Activated CD4-positive, alpha-beta T cell treated with anti-CD3 and anti-CD28 coated beads for 36 hours (primary cell): ENCODE measurements at regions of chr6 and their contacts with region 1.

Region 1: GRCh38 chr6:125773387-125774341 is 17.1 kb upstream of the NCOA7 start:
- DNase-seq: peak; percentile 35
- ATAC-seq: peak; percentile 82
- H3K4me3 Mint-ChIP-seq: no peak overlapping the region
- H3K27ac Mint-ChIP-seq: no peak overlapping the region
- H3K4me1 Mint-ChIP-seq: peaks cover 14% of the 10 kb centered on the region
- H3K27me3 Mint-ChIP-seq: no peaks in the 10 kb centered on the region

Region 2: DNA sequence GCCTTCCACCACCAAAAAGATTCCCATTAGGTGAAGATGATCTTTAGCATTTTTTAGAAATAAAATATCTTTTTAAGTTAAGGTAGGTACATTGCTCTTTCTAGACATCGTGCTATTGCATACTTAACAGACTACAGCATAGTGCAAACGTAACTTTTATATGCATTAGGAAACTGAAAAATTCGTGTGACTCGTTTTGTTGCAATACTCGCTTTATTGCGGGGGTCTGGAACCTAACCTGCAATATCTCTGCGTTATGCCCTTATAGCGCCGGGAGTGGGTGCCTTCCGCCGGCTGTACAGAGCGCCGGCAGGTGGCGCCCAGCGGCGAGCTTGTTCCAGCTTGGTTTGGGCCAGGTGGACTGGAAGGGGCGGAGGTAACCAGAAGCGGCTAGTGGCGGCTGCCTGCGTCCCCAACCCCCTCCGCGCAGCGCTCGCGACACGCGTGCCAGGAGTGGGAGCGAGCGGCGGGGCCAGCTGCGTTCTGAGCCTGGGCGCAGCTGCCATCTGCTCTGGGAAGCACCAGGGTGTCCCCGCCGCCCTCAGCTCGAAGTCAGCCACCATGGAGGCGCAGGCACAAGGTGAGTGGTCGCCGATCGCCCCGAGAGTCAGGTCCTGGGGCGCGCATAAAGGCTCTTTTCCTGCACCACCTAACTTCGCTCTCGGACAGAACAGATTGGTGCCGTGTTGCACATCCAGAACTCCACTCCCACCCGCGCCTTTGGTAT is 620.1 kb before region 1 on chr6 and contains the start of gene TPD52L1:
- CTCF ChIA-PET with region 1: no interaction called
- POLR2A ChIA-PET with region 1: no interaction called
- intact Hi-C with region 1: loop called in 1 of 2 experiments (anchors 2 kb)
- DNase-seq: peak; percentile 81
- ATAC-seq: peak; percentile 94
- H3K4me3 Mint-ChIP-seq: peak within 1 kb of the TSS; percentile 64
- H3K27ac Mint-ChIP-seq: no peak within 1 kb of the TSS
- H3K4me1 Mint-ChIP-seq: peaks cover 5% of the 10 kb centered on the region
- H3K27me3 Mint-ChIP-seq: peaks cover 36% of the 10 kb centered on the region
- total RNA-seq, gene TPD52L1: 0.89 to 1.4 TPM

Region 3: GRCh38 chr6:125314019-125314581 is 459.6 kb before region 1 on chr6:
- CTCF ChIA-PET with region 1: interaction called, 8 read pairs
- POLR2A ChIA-PET with region 1: no interaction called
- intact Hi-C with region 1: loop called (anchors 1 kb)
- DNase-seq: peak; percentile 62
- ATAC-seq: peak; percentile 74
- H3K4me3 Mint-ChIP-seq: no peak overlapping the region
- H3K27ac Mint-ChIP-seq: no peak overlapping the region
- H3K4me1 Mint-ChIP-seq: no peaks in the 10 kb centered on the region
- H3K27me3 Mint-ChIP-seq: peaks cover 2% of the 10 kb centered on the region

Region 4: GRCh38 chr6:125637207-125637606 is 136.5 kb before region 1 on chr6:
- CTCF ChIA-PET with region 1: no interaction called
- POLR2A ChIA-PET with region 1: no interaction called
- intact Hi-C with region 1: no loop called
- DNase-seq: no peak
- ATAC-seq: no peak
- H3K4me3 Mint-ChIP-seq: no peak overlapping the region
- H3K27ac Mint-ChIP-seq: no peak overlapping the region
- H3K4me1 Mint-ChIP-seq: no peaks in the 10 kb centered on the region
- H3K27me3 Mint-ChIP-seq: peaks cover 5% of the 10 kb centered on the region